Heart left ventricle (tissue), 16 donors: ENCODE measurements at regions of chr15 and their contacts with region 1.

Region 1: GRCh38 chr15:71182522-71182921 is 67.3 kb downstream of the THSD4 start:
- DNase-seq: no peak
- ATAC-seq: no peak
- H3K4me3 ChIP-seq: no peak overlapping the region
- H3K27ac ChIP-seq: no peak overlapping the region
- H3K4me1 ChIP-seq: peaks cover 0 to 18% (median 5%) of the 10 kb centered on the region in 12 donors
- H3K27me3 ChIP-seq: no peaks in the 10 kb centered on the region
- CTCF ChIP-seq: no peak
- POLR2A ChIP-seq: no peak

Region 2: GRCh38 chr15:71139241-71139640 is 43.3 kb before region 1 on chr15:
- intact Hi-C with region 1: no loop called
- DNase-seq: no peak
- ATAC-seq: no peak
- H3K4me3 ChIP-seq: no peak overlapping the region
- H3K27ac ChIP-seq: peak overlapping the region in 5 of 12 donors; percentile 6 to 44 (median 29)
- H3K4me1 ChIP-seq: peaks cover 4 to 77% (median 35%) of the 10 kb centered on the region in 12 donors
- H3K27me3 ChIP-seq: no peaks in the 10 kb centered on the region
- CTCF ChIP-seq: no peak
- POLR2A ChIP-seq: no peak

Region 3: GRCh38 chr15:71228403-71228802 is 45.9 kb after region 1 on chr15:
- intact Hi-C with region 1: loop called in 1 of 10 experiments (anchors 5 kb)
- DNase-seq: no peak
- ATAC-seq: no peak
- H3K4me3 ChIP-seq: no peak overlapping the region
- H3K27ac ChIP-seq: peak overlapping the region in 4 of 12 donors; percentile 6 to 26 (median 20)
- H3K4me1 ChIP-seq: peaks cover 0 to 40% (median 9%) of the 10 kb centered on the region in 12 donors
- H3K27me3 ChIP-seq: no peaks in the 10 kb centered on the region
- CTCF ChIP-seq: no peak
- POLR2A ChIP-seq: no peak

Region 4: DNA sequence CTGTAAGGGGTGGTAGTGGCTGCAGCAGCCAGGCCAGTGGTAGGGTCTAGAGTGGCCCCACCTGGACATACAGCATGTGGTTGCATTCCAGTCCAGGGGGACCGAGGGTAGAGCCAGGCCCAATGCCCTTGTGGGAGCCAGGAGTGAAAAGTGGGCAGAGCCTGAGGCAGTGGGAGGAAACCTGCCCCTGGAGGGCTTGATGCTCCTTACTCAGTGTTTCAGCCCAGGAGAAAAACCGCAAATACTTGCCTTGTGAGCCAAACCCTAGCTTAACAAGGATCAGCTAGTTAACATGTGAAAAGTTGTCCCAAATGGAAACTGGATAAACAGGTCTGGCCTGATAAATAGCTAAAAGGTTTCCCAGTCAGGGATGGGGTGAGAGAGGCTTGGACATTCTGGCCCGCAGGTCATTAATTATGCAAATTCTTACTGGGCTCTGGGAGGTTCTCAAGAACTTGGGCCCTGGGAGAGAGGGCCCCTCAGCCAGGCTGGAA is 154.7 kb after region 1 on chr15:
- intact Hi-C with region 1: no loop called
- DNase-seq: no peak
- ATAC-seq: peak in 1 of 4 donors; percentile 18
- H3K4me3 ChIP-seq: no peak overlapping the region
- H3K27ac ChIP-seq: peak overlapping the region in 11 of 12 donors; percentile 51 to 94 (median 86)
- H3K4me1 ChIP-seq: peaks cover 0 to 33% (median 6%) of the 10 kb centered on the region in 12 donors
- H3K27me3 ChIP-seq: no peaks in the 10 kb centered on the region
- CTCF ChIP-seq: no peak
- POLR2A ChIP-seq: no peak

Region 5: GRCh38 chr15:71397377-71397776 is 214.9 kb after region 1 on chr15:
- intact Hi-C with region 1: no loop called
- DNase-seq: no peak
- ATAC-seq: no peak
- H3K4me3 ChIP-seq: no peak overlapping the region
- H3K27ac ChIP-seq: no peak overlapping the region
- H3K4me1 ChIP-seq: peaks cover 0 to 27% (median 6%) of the 10 kb centered on the region in 12 donors
- H3K27me3 ChIP-seq: no peaks in the 10 kb centered on the region
- CTCF ChIP-seq: no peak
- POLR2A ChIP-seq: no peak